CD4-positive, alpha-beta T cell (primary cell): ENCODE measurements at regions of chr10 and their contacts with region 1.

Region 1: DNA sequence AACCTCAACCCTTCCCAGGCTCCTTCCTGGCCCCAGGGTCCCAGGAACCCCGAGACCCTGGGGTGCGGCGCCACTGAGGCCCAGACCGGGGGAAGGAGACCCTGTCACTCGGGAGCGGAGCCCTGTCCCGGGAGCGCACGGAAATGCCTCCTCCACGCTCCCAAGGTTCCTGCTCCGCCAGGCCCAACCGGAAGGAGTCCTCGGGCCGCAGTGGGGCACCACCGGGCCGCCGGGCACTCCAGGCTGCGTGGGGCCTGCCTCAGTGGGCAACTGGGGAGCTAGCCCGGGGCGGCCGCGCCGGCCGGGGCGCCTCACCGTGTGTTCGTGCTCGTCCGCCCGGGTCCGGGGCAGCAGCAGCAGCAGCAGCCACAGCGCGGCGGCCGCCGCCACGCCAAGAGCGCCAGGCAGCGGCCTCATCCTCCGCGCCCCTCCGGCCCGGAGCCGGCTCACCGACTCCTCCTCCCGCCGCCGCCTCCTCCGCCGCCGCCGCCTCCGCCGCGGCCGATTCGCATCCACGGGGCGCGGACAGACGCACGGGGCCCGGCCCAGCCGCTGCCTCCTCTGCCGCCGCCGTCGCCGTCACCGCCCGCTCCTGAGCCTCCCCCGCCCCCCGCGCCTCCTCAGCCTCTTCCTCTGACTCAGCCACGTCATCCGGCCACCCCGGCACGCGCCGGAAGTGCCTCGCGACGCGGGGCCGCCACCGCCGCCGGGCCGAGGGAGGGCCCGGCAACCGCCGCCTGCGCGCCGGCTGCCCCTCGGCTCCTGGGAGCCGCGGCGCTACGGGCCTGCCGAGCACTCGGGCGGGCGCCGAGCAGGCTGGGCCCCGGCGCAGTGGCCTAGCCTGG is at the start of gene TM9SF3:
- DNase-seq: peak; percentile 85 to 97 (median 92)
- ATAC-seq: peak; percentile 81
- H3K4me3 ChIP-seq: peak within 1 kb of the TSS; percentile 95
- H3K4me3 Mint-ChIP-seq: peak within 1 kb of the TSS; percentile 95
- H3K27ac ChIP-seq: peak within 1 kb of the TSS; percentile 96 to 98
- H3K27ac Mint-ChIP-seq: no peak within 1 kb of the TSS
- H3K4me1 ChIP-seq: peaks cover 34% of the 10 kb centered on the region
- H3K4me1 Mint-ChIP-seq: peaks cover 44% of the 10 kb centered on the region
- H3K27me3 ChIP-seq: no peaks in the 10 kb centered on the region
- H3K27me3 Mint-ChIP-seq: no peaks in the 10 kb centered on the region
- CTCF ChIP-seq: no peak
- total RNA-seq, gene TM9SF3: 92.4 to 92.7 TPM

Region 2: GRCh38 chr10:96089670-96090462 is 496.8 kb before region 1 on chr10:
- CTCF ChIA-PET with region 1: no interaction called
- POLR2A ChIA-PET with region 1: no interaction called
- intact Hi-C with region 1: loop called in 1 of 2 experiments (anchors 5 kb)
- DNase-seq: peak; percentile 86 to 97 (median 90)
- ATAC-seq: peak; percentile 84
- H3K4me3 ChIP-seq: peak overlapping the region; percentile 78
- H3K4me3 Mint-ChIP-seq: peak overlapping the region; percentile 93
- H3K27ac ChIP-seq: peak overlapping the region; percentile 90 to 97
- H3K27ac Mint-ChIP-seq: peak overlapping the region; percentile 98
- H3K4me1 ChIP-seq: peaks cover 13% of the 10 kb centered on the region
- H3K4me1 Mint-ChIP-seq: peaks cover 16% of the 10 kb centered on the region
- H3K27me3 ChIP-seq: peaks cover 14 to 28% of the 10 kb centered on the region in 2 experiments
- H3K27me3 Mint-ChIP-seq: peaks cover 43% of the 10 kb centered on the region
- CTCF ChIP-seq: no peak

Region 3: DNA sequence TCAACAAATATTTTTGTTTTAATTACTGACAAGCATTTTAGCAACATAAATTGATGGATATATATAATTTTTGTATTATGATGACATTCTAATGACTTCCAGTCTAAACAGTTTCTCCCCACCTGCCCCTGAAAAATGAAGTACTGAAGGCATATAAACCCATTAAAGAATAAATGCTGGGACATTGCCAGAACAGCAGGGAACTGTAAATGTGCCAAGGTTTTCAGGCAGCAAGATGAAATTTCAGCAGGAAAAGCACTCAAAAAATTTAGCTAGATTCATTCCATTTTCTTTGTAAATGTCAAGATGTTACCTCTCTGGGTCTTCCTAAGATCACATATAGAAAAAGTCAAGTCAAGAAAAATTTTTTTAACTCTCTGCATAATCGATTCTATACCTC is 61.9 kb before region 1 on chr10:
- CTCF ChIA-PET with region 1: no interaction called
- POLR2A ChIA-PET with region 1: interaction called, 3 read pairs
- intact Hi-C with region 1: loop called in 1 of 2 experiments (anchors 5 kb)
- DNase-seq: no peak
- ATAC-seq: no peak
- H3K4me3 ChIP-seq: no peak overlapping the region
- H3K4me3 Mint-ChIP-seq: no peak overlapping the region
- H3K27ac ChIP-seq: no peak overlapping the region
- H3K27ac Mint-ChIP-seq: no peak overlapping the region
- H3K4me1 ChIP-seq: no peaks in the 10 kb centered on the region
- H3K4me1 Mint-ChIP-seq: no peaks in the 10 kb centered on the region
- H3K27me3 ChIP-seq: no peaks in the 10 kb centered on the region
- H3K27me3 Mint-ChIP-seq: no peaks in the 10 kb centered on the region
- CTCF ChIP-seq: no peak

Region 4: GRCh38 chr10:96719850-96720421 is 133.3 kb after region 1 on chr10:
- CTCF ChIA-PET with region 1: no interaction called
- POLR2A ChIA-PET with region 1: no interaction called
- intact Hi-C with region 1: loop called in 1 of 2 experiments (anchors 10 kb)
- DNase-seq: peak in 13 of 14 experiments; percentile 7 to 71 (median 28)
- ATAC-seq: peak; percentile 39
- H3K4me3 ChIP-seq: peak overlapping the region; percentile 61
- H3K4me3 Mint-ChIP-seq: peak overlapping the region; percentile 96
- H3K27ac ChIP-seq: no peak overlapping the region
- H3K27ac Mint-ChIP-seq: no peak overlapping the region
- H3K4me1 ChIP-seq: peaks cover 19% of the 10 kb centered on the region
- H3K4me1 Mint-ChIP-seq: peaks cover 15% of the 10 kb centered on the region
- H3K27me3 ChIP-seq: no peaks in the 10 kb centered on the region
- H3K27me3 Mint-ChIP-seq: no peaks in the 10 kb centered on the region
- CTCF ChIP-seq: peak; percentile 47

Region 5: DNA sequence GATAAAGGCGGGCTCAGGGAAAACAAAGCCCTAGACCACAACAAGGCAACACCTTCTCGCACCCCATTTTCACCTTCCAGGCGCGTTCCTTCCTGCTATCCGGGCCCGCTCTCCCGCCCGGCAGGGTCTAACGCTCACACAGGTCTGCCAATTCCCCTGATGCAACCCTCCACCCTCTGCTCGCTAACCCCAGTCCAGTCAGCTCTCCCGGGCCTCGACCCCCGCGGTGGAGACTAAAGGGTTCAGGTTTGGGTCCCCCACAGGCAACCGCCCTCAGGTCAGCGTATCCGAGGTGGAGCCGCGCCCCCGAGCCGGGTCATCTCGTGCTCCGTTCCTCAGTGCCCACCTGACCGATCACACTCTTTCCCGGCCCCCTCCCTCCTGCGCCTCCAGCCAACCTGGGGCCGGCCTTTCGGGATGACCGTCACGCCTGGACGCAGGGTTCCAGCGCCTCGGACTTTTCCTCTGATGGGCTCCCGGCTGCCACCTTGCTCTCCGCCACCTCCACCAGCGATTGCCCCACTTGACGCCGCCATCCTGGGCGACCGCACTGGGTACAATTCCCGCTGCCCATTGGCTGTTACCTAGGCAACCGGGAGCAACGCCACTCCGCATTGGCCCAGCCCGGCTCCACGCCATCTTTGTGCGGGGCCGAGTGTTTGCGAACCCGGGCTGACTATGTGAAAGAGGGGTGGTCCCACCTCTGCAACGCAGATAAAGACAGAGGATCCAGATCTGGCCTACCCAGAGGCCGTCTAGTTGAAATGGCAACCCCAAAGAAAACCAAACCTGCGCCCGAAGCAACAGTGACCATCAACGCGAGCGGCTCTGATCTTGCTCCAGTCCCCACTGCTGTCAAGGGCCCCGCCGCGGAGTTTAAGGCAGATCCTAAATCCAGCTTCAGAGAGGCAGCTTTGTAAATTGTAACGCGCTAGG is 1046.6 kb after region 1 on chr10 and contains the start of gene MORN4:
- CTCF ChIA-PET with region 1: no interaction called
- POLR2A ChIA-PET with region 1: no interaction called
- intact Hi-C with region 1: loop called in 1 of 2 experiments (anchors 10 kb)
- DNase-seq: peak; percentile 85 to 95 (median 89)
- ATAC-seq: peak; percentile 99
- H3K4me3 ChIP-seq: peak within 1 kb of the TSS; percentile 98
- H3K4me3 Mint-ChIP-seq: peak within 1 kb of the TSS; percentile 94
- H3K27ac ChIP-seq: no peak within 1 kb of the TSS
- H3K27ac Mint-ChIP-seq: peak within 1 kb of the TSS; percentile 71
- H3K4me1 ChIP-seq: peaks cover 18% of the 10 kb centered on the region
- H3K4me1 Mint-ChIP-seq: peaks cover 16% of the 10 kb centered on the region
- H3K27me3 ChIP-seq: no peaks in the 10 kb centered on the region
- H3K27me3 Mint-ChIP-seq: no peaks in the 10 kb centered on the region
- CTCF ChIP-seq: no peak
- total RNA-seq, gene MORN4: 0.36 to 0.39 TPM